Activated T-helper 2 cell treated with anti-CD3 and anti-CD28 coated beads, Interferon-gamma antibody, Interleukin-2, Interleukin-4, amounts not matched to agents 10 μg/mL and 5 μg/mL and 100 μg/mL, durations not matched to agents 14 hours and 24 hours and 36 hours (primary cell): ENCODE measurements at regions of chr3 and their contacts with region 1.

Region 1: DNA sequence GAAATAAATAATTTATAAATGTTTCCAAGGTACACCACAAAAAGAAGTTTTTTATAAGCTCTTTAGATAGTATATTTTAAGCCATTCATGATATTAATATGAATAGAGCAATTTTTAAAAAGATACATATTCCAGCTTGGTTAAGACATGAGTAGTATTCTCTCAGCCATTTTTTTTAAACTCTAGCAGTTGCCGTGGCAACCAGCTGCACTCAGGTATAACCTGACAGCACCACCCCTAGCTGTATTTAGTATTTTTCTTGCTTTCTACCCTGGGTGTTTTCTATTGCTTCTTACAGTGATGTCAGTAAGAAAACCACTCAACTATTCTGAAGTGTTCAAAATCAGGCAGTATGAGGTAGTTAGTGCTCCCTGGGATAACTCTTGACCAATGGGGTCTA is 496.3 kb upstream of the CNTN3 start:
- DNase-seq: no peak
- H3K4me3 Mint-ChIP-seq: no peak overlapping the region
- H3K27ac Mint-ChIP-seq: no peak overlapping the region
- H3K4me1 Mint-ChIP-seq: no peaks in the 10 kb centered on the region
- H3K27me3 Mint-ChIP-seq: no peaks in the 10 kb centered on the region

Region 2: GRCh38 chr3:74214286-74214685 is 896.5 kb before region 1 on chr3:
- intact Hi-C with region 1: loop called (anchors 10 kb)
- DNase-seq: no peak
- H3K4me3 Mint-ChIP-seq: no peak overlapping the region
- H3K27ac Mint-ChIP-seq: no peak overlapping the region
- H3K4me1 Mint-ChIP-seq: no peaks in the 10 kb centered on the region
- H3K27me3 Mint-ChIP-seq: no peaks in the 10 kb centered on the region

Region 3: DNA sequence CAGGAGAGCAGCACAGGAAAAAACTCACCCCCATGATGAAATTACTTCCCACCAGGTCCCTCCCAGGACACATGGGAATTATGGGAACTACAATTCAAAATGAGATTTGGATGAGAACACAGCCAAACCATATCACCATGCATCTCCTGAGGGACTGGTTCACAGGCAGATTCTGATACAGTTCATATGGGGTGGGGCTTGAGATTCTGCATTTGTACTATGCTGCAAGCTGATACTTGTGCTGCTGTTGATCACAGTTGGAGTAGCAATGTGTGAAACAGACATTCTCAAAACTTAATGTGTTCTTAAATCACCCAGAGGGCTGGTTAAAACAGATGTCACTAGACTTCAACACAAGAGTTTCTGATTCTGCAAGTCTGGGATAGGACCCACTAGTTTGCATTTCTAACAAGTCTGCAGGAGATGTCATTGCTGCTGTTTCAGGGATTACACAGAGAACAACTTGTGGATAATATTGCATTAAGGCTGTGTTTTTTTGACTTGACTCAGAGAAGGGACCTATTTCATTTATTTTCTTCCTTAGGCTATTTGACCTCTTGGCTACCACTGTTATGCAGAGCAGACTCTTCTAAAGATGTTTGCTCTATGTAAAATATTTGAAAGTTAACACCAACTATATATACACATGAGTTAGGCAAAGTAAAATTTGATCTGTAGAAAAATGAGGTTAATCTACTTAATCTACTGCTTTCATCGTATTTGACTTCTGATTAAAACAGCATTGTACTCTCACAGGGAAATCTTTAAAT is 302.1 kb before region 1 on chr3:
- intact Hi-C with region 1: no loop called
- DNase-seq: no peak
- H3K4me3 Mint-ChIP-seq: no peak overlapping the region
- H3K27ac Mint-ChIP-seq: no peak overlapping the region
- H3K4me1 Mint-ChIP-seq: no peaks in the 10 kb centered on the region
- H3K27me3 Mint-ChIP-seq: no peaks in the 10 kb centered on the region

Region 4: GRCh38 chr3:75075158-75075557 is 35.6 kb before region 1 on chr3:
- intact Hi-C with region 1: no loop called
- DNase-seq: no peak
- H3K4me3 Mint-ChIP-seq: no peak overlapping the region
- H3K27ac Mint-ChIP-seq: no peak overlapping the region
- H3K4me1 Mint-ChIP-seq: no peaks in the 10 kb centered on the region
- H3K27me3 Mint-ChIP-seq: no peaks in the 10 kb centered on the region